Transverse colon (tissue), 4 donors: ENCODE measurements at regions of chr18 and their contacts with region 1.

Region 1: GRCh38 chr18:21955757-21956652 is 213.4 kb upstream of the GATA6 start:
- DNase-seq: peak; percentile 85
- H3K4me3 ChIP-seq: no peak overlapping the region
- H3K27ac ChIP-seq: no peak overlapping the region
- H3K4me1 ChIP-seq: no peaks in the 10 kb centered on the region
- H3K27me3 ChIP-seq: no peaks in the 10 kb centered on the region
- CTCF ChIP-seq: peak; percentile 78 to 92 (median 90)
- EP300 ChIP-seq: no peak
- POLR2A ChIP-seq: no peak

Region 2: GRCh38 chr18:21191596-21192307 is 764.3 kb before region 1 on chr18:
- in situ Hi-C with region 1: loop called in 2 of 4 experiments (anchors 10 to 25 kb)
- intact Hi-C with region 1: no loop called
- DNase-seq: peak; percentile 39
- H3K4me3 ChIP-seq: no peak overlapping the region
- H3K27ac ChIP-seq: no peak overlapping the region
- H3K4me1 ChIP-seq: no peaks in the 10 kb centered on the region
- H3K27me3 ChIP-seq: peaks cover 9% of the 10 kb centered on the region
- CTCF ChIP-seq: peak in 4 of 5 experiments; percentile 9 to 42 (median 37)
- EP300 ChIP-seq: no peak
- POLR2A ChIP-seq: no peak

Region 3: GRCh38 chr18:21904856-21905255 is 51.1 kb before region 1 on chr18:
- in situ Hi-C with region 1: loop called in 1 of 4 experiments (anchors 10 kb)
- intact Hi-C with region 1: loop called (anchors 10 kb)
- DNase-seq: no peak
- H3K4me3 ChIP-seq: no peak overlapping the region
- H3K27ac ChIP-seq: no peak overlapping the region
- H3K4me1 ChIP-seq: peaks cover 0 to 21% (median 5%) of the 10 kb centered on the region in 4 donors
- H3K27me3 ChIP-seq: no peaks in the 10 kb centered on the region
- CTCF ChIP-seq: no peak
- EP300 ChIP-seq: no peak
- POLR2A ChIP-seq: no peak

Region 4: GRCh38 chr18:22084547-22084946 is 128.5 kb after region 1 on chr18:
- in situ Hi-C with region 1: no loop called
- intact Hi-C with region 1: no loop called
- DNase-seq: peak; percentile 82
- H3K4me3 ChIP-seq: peak overlapping the region in 1 of 4 donors; percentile 15
- H3K27ac ChIP-seq: peak overlapping the region; percentile 68 to 80 (median 73)
- H3K4me1 ChIP-seq: peaks cover 0 to 35% (median 11%) of the 10 kb centered on the region in 4 donors
- H3K27me3 ChIP-seq: no peaks in the 10 kb centered on the region
- CTCF ChIP-seq: peak in 1 of 5 experiments; percentile 37
- EP300 ChIP-seq: no peak
- POLR2A ChIP-seq: peak; percentile 41